ENCODE measurements at regions of chr3 and their contacts with region 1.

Region 1: DNA sequence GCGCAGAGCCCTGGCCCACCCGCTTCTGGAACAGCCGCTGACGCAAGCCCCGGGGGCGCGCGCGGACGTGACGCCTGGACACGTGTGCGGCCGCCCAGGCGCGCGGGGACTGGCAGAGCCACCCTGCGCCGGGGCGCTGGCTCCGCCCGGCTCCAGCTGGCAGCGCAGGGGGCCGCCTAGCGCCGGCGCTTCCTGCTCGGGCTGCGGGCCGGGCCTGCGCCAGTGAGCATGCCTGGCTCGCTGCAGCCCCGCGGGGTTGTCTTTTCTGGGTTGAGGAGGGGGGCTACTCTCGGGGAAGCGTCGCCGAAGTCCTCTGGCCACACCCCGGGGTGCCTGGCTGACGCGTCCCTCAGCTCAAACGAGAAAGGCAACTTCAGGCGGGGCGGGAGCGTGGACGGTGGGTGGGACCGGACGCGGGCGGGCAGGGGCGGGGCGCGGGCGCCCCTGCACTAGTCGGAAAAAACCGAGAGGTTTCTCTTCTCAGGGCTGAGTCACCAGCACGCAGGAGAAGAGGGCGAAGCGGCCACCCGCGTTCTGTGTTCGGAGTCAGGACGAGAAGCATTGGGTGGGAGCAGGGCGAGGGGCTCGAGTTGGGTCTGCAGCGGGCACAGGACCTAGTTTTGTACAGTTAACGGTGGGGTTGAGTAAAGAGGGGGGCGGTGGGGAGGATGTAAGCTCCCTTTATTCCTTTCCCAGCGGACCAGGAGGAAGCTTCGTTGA is at the start of gene SIAH2:
- DNase-seq: peak; percentile 95
- ATAC-seq: peak; percentile 81
- H3K4me3 Mint-ChIP-seq: peak within 1 kb of the TSS; percentile 99
- H3K27ac Mint-ChIP-seq: peak within 1 kb of the TSS; percentile 99
- H3K4me1 Mint-ChIP-seq: peaks cover 32% of the 10 kb centered on the region
- H3K27me3 Mint-ChIP-seq: no peaks in the 10 kb centered on the region
- total RNA-seq, gene SIAH2: 28.3 TPM

Region 2: GRCh38 chr3:150408221-150409102 is 354.8 kb before region 1 on chr3 and contains the start of gene TSC22D2:
- POLR2A ChIA-PET with region 1: interaction called, 46 read pairs
- DNase-seq: peak; percentile 97
- ATAC-seq: peak; percentile 70
- H3K4me3 Mint-ChIP-seq: peak within 1 kb of the TSS; percentile 87
- H3K27ac Mint-ChIP-seq: peak within 1 kb of the TSS; percentile 92
- H3K4me1 Mint-ChIP-seq: peaks cover 28% of the 10 kb centered on the region
- H3K27me3 Mint-ChIP-seq: peaks cover 2% of the 10 kb centered on the region
- total RNA-seq, gene TSC22D2: 15.5 to 15.8 TPM

Region 3: GRCh38 chr3:150603153-150603979 is 159.9 kb before region 1 on chr3 and contains the start of gene SELENOT:
- POLR2A ChIA-PET with region 1: interaction called, 51 read pairs
- DNase-seq: peak; percentile 98
- ATAC-seq: peak; percentile 91
- H3K4me3 Mint-ChIP-seq: peak within 1 kb of the TSS; percentile 88
- H3K27ac Mint-ChIP-seq: peak within 1 kb of the TSS; percentile 92
- H3K4me1 Mint-ChIP-seq: peaks cover 46% of the 10 kb centered on the region
- H3K27me3 Mint-ChIP-seq: no peaks in the 10 kb centered on the region
- total RNA-seq, gene SELENOT: 92.5 to 94.2 TPM

Region 4: GRCh38 chr3:150703299-150704134 is 59.8 kb before region 1 on chr3 and contains the start of gene ERICH6:
- POLR2A ChIA-PET with region 1: interaction called, 63 read pairs
- DNase-seq: peak; percentile 89
- ATAC-seq: peak; percentile 89
- H3K4me3 Mint-ChIP-seq: peak within 1 kb of the TSS; percentile 92
- H3K27ac Mint-ChIP-seq: peak within 1 kb of the TSS; percentile 95
- H3K4me1 Mint-ChIP-seq: peaks cover 21% of the 10 kb centered on the region
- H3K27me3 Mint-ChIP-seq: peaks cover 18% of the 10 kb centered on the region
- total RNA-seq, gene ERICH6: 0.23 TPM in 1 of 2 experiments, not detected in the other

Region 5: GRCh38 chr3:150751753-150752263 is 11.5 kb before region 1 on chr3:
- POLR2A ChIA-PET with region 1: interaction called, 23 read pairs
- DNase-seq: no peak
- ATAC-seq: no peak
- H3K4me3 Mint-ChIP-seq: no peak overlapping the region
- H3K27ac Mint-ChIP-seq: no peak overlapping the region
- H3K4me1 Mint-ChIP-seq: peaks cover 42% of the 10 kb centered on the region
- H3K27me3 Mint-ChIP-seq: no peaks in the 10 kb centered on the region

Measured in activated naive CD8-positive, alpha-beta T cell treated with anti-CD3 and anti-CD28 coated beads, Interleukin-2, amount 10 ng/mL, durations not matched to agents 7 days and 5 days (primary cell).